MCF 10A (cell line): ENCODE measurements at regions of chr10 and their contacts with region 1.

Region 1: DNA sequence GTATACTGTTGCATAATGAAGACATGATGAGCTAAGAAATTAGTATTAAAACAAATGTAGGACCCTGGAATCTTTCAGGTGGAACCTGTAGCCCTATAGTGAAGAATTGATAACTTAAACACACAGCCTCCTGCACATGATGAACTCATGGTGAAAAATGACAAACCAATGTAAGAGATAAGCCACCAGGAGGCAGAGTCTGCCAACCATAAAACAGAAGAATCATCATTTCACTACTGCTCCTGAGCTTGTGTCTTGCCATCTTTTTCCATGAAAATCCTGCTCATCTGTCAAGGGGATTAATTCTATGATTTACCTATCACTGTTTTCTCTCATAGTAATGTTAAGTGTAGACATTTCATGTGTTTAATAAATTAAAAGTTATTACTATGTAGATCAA is 363.9 kb downstream of the MALRD1 start:
- DNase-seq: peak; percentile 57
- H3K4me3 Mint-ChIP-seq: no peak overlapping the region
- H3K27ac Mint-ChIP-seq: no peak overlapping the region
- H3K4me1 Mint-ChIP-seq: no peaks in the 10 kb centered on the region
- H3K27me3 Mint-ChIP-seq: no peaks in the 10 kb centered on the region
- CTCF ChIP-seq: peak; percentile 42

Region 2: GRCh38 chr10:18689498-18689897 is 723.0 kb before region 1 on chr10:
- CTCF ChIA-PET with region 1: interaction called, 4 read pairs
- POLR2A ChIA-PET with region 1: no interaction called
- intact Hi-C with region 1: loop called (anchors 2 kb)
- DNase-seq: peak; percentile 50
- H3K4me3 Mint-ChIP-seq: no peak overlapping the region
- H3K27ac Mint-ChIP-seq: no peak overlapping the region
- H3K4me1 Mint-ChIP-seq: no peaks in the 10 kb centered on the region
- H3K27me3 Mint-ChIP-seq: no peaks in the 10 kb centered on the region
- CTCF ChIP-seq: peak; percentile 43

Region 3: DNA sequence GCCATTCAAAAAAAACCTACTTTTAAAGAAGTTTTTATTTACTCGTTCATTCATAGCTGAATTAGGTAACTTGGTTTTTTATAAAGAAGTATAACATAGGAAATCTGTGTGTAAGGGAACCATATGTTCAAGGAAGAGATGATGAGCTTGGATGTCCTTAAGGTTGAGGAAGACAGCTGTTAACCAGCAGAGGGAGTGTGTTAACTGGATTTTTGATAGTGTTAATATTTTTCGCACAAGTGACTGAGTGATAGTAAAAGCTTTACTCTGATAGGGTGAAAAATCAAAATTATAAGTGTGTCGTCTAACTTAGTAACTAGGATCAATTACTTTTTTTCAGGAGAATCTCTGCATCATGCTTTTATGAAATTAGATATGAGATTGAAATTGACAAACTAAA is 618.6 kb before region 1 on chr10:
- CTCF ChIA-PET with region 1: interaction called, 4 read pairs
- POLR2A ChIA-PET with region 1: no interaction called
- intact Hi-C with region 1: loop called (anchors 10 kb)
- DNase-seq: peak; percentile 49
- H3K4me3 Mint-ChIP-seq: no peak overlapping the region
- H3K27ac Mint-ChIP-seq: no peak overlapping the region
- H3K4me1 Mint-ChIP-seq: peaks cover 7% of the 10 kb centered on the region
- H3K27me3 Mint-ChIP-seq: no peaks in the 10 kb centered on the region
- CTCF ChIP-seq: peak; percentile 46

Region 4: GRCh38 chr10:19606968-19607367 is 194.4 kb after region 1 on chr10:
- CTCF ChIA-PET with region 1: no interaction called
- POLR2A ChIA-PET with region 1: no interaction called
- intact Hi-C with region 1: no loop called
- DNase-seq: no peak
- H3K4me3 Mint-ChIP-seq: no peak overlapping the region
- H3K27ac Mint-ChIP-seq: no peak overlapping the region
- H3K4me1 Mint-ChIP-seq: no peaks in the 10 kb centered on the region
- H3K27me3 Mint-ChIP-seq: no peaks in the 10 kb centered on the region
- CTCF ChIP-seq: no peak

Region 5: DNA sequence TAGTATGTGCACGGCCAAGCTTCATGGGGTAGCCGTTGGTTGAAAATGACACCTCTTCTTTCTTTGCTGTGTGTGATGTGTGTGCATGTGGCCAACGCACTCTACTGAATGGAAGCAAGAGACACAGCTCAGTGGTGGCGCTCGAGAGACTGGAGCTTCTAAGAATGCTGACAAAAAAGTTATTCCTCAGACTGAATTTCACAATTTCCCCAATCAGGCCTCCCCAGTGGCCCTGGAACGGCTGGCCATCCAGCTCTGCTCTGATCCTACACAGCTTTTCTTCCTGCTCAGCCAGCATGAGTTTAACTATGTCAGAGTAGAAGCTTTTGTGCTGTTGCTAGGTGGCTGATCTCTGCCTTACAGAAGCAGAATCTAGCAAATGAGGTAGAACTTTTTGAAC is 217.0 kb after region 1 on chr10:
- CTCF ChIA-PET with region 1: interaction called, 3 read pairs
- POLR2A ChIA-PET with region 1: no interaction called
- intact Hi-C with region 1: loop called (anchors 10 kb)
- DNase-seq: no peak
- H3K4me3 Mint-ChIP-seq: no peak overlapping the region
- H3K27ac Mint-ChIP-seq: no peak overlapping the region
- H3K4me1 Mint-ChIP-seq: no peaks in the 10 kb centered on the region
- H3K27me3 Mint-ChIP-seq: no peaks in the 10 kb centered on the region
- CTCF ChIP-seq: no peak

Region 6: GRCh38 chr10:19788075-19788686 is 375.6 kb after region 1 on chr10:
- CTCF ChIA-PET with region 1: interaction called, 14 read pairs
- POLR2A ChIA-PET with region 1: no interaction called
- intact Hi-C with region 1: loop called (anchors 1 kb)
- DNase-seq: peak; percentile 64
- H3K4me3 Mint-ChIP-seq: no peak overlapping the region
- H3K27ac Mint-ChIP-seq: no peak overlapping the region
- H3K4me1 Mint-ChIP-seq: peaks cover 23% of the 10 kb centered on the region
- H3K27me3 Mint-ChIP-seq: no peaks in the 10 kb centered on the region
- CTCF ChIP-seq: peak; percentile 76

Region 7: GRCh38 chr10:20768843-20769242 is 1356.3 kb after region 1 on chr10:
- CTCF ChIA-PET with region 1: interaction called, 29 read pairs
- POLR2A ChIA-PET with region 1: interaction called, 5 read pairs
- intact Hi-C with region 1: loop called (anchors 1 kb)
- DNase-seq: peak; percentile 42
- H3K4me3 Mint-ChIP-seq: no peak overlapping the region
- H3K27ac Mint-ChIP-seq: no peak overlapping the region
- H3K4me1 Mint-ChIP-seq: peaks cover 9% of the 10 kb centered on the region
- H3K27me3 Mint-ChIP-seq: no peaks in the 10 kb centered on the region
- CTCF ChIP-seq: peak; percentile 58

Region 8: GRCh38 chr10:20858292-20859124 is 1446.0 kb after region 1 on chr10:
- CTCF ChIA-PET with region 1: no interaction called
- POLR2A ChIA-PET with region 1: no interaction called
- intact Hi-C with region 1: loop called (anchors 5 kb)
- DNase-seq: peak; percentile 53
- H3K4me3 Mint-ChIP-seq: no peak overlapping the region
- H3K27ac Mint-ChIP-seq: no peak overlapping the region
- H3K4me1 Mint-ChIP-seq: peaks cover 2% of the 10 kb centered on the region
- H3K27me3 Mint-ChIP-seq: no peaks in the 10 kb centered on the region
- CTCF ChIP-seq: peak; percentile 37